AG04450 (cell line): ENCODE measurements at regions of chr20 and their contacts with region 1.

Region 1: GRCh38 chr20:44208770-44209169 is 1.8 kb downstream of the OSER1 start:
- DNase-seq: no peak
- H3K4me3 ChIP-seq: peak overlapping the region; percentile 95
- H3K27ac ChIP-seq: no peak overlapping the region
- H3K27me3 ChIP-seq: no peaks in the 10 kb centered on the region
- CTCF ChIP-seq: peak; percentile 24; the same call in 1 of the 2 replicates

Region 2: DNA sequence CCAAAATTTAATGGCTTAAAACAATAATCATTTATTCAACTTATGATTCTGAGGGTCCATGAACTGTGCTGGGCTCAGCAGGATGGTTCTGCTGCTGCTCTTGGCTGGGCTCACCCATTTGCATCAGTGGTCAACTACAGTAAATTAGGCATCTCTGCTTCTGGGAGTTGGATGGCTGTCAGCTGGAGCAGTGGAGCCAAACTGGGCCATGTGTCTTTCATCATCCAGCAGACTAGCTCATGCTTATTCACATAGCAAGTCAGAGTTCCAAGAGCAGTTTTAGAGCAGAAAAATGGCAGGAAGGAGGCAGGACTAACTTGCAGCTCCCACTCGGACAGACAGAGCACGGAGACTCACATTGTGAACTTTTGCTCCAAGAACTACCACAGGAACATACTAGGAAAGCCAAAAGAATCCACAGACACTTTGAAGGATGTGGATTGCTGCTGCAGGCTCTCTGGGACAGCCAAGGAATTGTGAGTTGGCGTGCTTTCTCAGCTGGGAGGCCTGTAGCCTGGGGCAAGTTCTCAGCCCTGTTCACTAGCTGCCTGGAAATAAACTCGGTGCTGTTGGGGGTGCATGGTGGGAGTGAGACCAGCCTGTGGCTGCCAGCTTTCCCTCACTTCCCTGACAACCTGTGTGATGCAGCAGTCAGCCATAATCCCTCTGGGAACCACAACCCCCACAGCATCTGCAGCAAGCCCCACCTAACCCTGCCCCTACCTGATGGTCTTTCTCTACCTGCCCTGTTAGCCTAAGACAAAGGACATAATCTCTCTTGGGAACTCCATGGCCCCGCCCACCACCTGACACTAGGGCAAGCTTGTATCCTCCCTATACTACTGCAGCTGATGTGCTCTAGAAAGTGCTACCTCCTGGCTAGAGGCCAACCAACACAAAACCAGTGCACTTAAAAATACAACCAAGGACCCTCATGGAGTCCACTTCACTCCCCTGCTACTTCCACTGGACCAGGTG is 150.8 kb before region 1 on chr20:
- CTCF ChIA-PET with region 1: no interaction called
- POLR2A ChIA-PET with region 1: no interaction called
- DNase-seq: no peak
- H3K4me3 ChIP-seq: no peak overlapping the region
- H3K27ac ChIP-seq: no peak overlapping the region
- H3K27me3 ChIP-seq: no peaks in the 10 kb centered on the region
- CTCF ChIP-seq: no peak

Region 3: GRCh38 chr20:44117296-44118184 is 91.2 kb before region 1 on chr20:
- CTCF ChIA-PET with region 1: interaction called, 32 read pairs
- POLR2A ChIA-PET with region 1: no interaction called
- DNase-seq: no peak
- H3K4me3 ChIP-seq: no peak overlapping the region
- H3K27ac ChIP-seq: no peak overlapping the region
- H3K27me3 ChIP-seq: peaks cover 9% of the 10 kb centered on the region
- CTCF ChIP-seq: no peak

Region 4: GRCh38 chr20:44196271-44196670 is 12.5 kb before region 1 on chr20:
- CTCF ChIA-PET with region 1: interaction called, 10 read pairs
- POLR2A ChIA-PET with region 1: no interaction called
- DNase-seq: no peak
- H3K4me3 ChIP-seq: no peak overlapping the region
- H3K27ac ChIP-seq: no peak overlapping the region
- H3K27me3 ChIP-seq: no peaks in the 10 kb centered on the region
- CTCF ChIP-seq: peak; percentile 36